Heart left ventricle (tissue), 16 donors: ENCODE measurements at regions of chr10 and their contacts with region 1.

Region 1: DNA sequence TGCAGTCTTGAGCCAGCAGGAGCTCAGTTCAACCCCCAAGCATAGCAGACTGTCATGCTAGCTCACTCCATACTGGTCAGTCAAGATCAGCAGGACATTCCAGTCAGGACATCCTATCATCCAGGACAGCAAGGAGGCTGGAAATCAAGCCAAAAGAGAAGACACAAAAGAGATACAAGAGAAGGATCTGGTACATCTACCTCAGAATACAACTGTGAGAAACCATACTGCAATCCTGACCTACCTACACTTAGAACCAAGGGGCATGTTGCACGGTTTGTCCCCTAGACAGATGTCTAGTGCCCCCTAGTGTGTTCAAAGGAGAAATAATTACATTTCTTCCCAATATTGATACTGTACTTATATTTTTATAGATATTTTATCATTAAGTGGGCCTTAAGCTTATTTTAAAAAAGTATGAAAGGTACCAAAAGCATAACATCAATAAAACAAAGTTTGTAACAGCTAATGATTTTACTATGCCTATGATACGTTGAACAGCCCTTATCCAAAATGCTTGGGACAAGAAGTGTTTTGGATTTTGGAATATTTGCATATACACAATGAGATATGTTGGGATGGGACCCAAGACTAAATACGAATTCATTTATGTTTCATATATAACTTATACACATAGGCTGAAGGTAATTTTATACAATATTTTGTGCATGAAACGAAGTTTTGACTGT is 26.7 kb downstream of the ERCC6 start:
- DNase-seq: no peak
- ATAC-seq: peak in 3 of 4 donors; percentile 34 to 51 (median 50)
- H3K4me3 ChIP-seq: no peak overlapping the region
- H3K27ac ChIP-seq: no peak overlapping the region
- H3K4me1 ChIP-seq: peaks cover 0 to 17% (median 5%) of the 10 kb centered on the region in 12 donors
- H3K27me3 ChIP-seq: no peaks in the 10 kb centered on the region
- CTCF ChIP-seq: peak; percentile 44 to 71 (median 64)
- POLR2A ChIP-seq: no peak

Region 2: GRCh38 chr10:48885383-48885782 is 626.9 kb before region 1 on chr10:
- intact Hi-C with region 1: loop called in 1 of 10 experiments (anchors 5 kb)
- DNase-seq: no peak
- ATAC-seq: no peak
- H3K4me3 ChIP-seq: no peak overlapping the region
- H3K27ac ChIP-seq: no peak overlapping the region
- H3K4me1 ChIP-seq: no peaks in the 10 kb centered on the region
- H3K27me3 ChIP-seq: no peaks in the 10 kb centered on the region
- CTCF ChIP-seq: peak in 8 of 12 donors; percentile 16 to 54 (median 42)
- POLR2A ChIP-seq: no peak

Region 3: DNA sequence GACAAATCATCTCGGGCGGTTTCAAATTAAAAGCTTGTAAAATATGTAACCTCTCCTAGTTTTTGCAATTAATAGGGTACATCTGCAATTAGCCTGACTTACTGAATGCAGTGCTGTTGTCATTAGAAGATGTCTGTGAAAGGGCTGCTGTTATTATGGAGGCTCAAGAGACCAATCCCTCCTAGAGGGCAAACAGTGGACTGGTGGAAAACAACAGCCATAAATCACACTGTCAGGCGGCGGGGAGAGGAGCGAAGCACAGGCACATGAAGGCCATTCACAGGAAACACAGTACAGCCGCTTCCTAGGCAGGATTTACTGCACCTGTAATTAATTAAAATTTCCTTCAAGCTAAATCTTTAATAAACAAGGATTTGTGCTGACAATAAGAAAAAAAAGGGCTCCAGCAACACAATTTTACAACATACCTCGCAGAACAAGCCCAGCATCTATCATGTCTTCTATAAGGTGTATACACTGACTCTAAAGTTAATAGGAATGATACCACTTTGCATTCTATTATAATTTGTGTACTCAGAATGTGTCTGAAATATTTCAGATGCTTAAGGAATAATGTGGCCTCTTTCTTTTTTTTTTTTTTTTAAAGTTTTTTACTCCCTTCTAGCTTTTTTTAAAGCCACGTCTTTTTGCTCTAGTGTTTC is 24.1 kb before region 1 on chr10:
- intact Hi-C with region 1: loop called in 1 of 10 experiments (anchors 1 kb)
- DNase-seq: no peak
- ATAC-seq: no peak
- H3K4me3 ChIP-seq: no peak overlapping the region
- H3K27ac ChIP-seq: no peak overlapping the region
- H3K4me1 ChIP-seq: no peaks in the 10 kb centered on the region
- H3K27me3 ChIP-seq: no peaks in the 10 kb centered on the region
- CTCF ChIP-seq: no peak
- POLR2A ChIP-seq: no peak